Natural killer cell (primary cell): ENCODE measurements at regions of chr13 and their contacts with region 1.

Region 1: GRCh38 chr13:44050450-44051063 is 170.9 kb downstream of the LACC1 start:
- DNase-seq: peak in 1 of 2 donors; percentile 65
- ATAC-seq: peak; percentile 49 to 73 (median 55)
- H3K4me3 ChIP-seq: no peak overlapping the region
- H3K4me3 Mint-ChIP-seq: no peak overlapping the region
- H3K27ac ChIP-seq: no peak overlapping the region
- H3K27ac Mint-ChIP-seq: no peak overlapping the region
- H3K4me1 ChIP-seq: no peaks in the 10 kb centered on the region
- H3K4me1 Mint-ChIP-seq: peaks cover 5% of the 10 kb centered on the region in 2 donors
- H3K27me3 ChIP-seq: no peaks in the 10 kb centered on the region
- H3K27me3 Mint-ChIP-seq: peaks cover 39 to 41% of the 10 kb centered on the region in 2 donors
- CTCF ChIP-seq: peak; percentile 83

Region 2: DNA sequence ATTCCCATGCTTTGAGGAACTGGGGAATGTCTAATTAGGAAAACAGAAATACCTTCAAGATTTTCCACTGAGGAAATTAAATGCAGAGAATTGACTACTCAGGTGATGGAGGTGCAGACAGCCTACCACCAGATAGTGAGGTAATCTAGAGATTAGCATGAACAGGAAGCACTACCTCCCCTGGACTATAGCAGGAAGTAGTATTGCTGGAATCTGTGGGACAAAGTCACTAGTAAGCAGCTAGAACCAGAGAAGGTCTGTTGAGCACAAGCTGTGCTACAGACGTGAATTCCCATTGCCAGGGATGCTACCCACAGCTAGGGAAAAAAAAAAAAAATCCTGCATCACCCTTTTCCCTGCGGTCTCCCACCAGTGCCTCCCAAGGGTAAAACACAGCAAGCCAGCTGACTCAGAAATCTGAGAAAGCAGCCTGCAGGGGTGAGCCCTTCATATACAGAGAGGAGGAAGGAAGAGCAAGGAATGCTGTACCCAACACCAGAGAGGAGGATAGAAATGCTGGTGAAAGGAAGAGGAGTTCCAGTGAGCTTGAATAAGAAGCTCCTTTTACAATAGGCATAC is 274.0 kb before region 1 on chr13:
- intact Hi-C with region 1: no loop called
- DNase-seq: no peak
- ATAC-seq: no peak
- H3K4me3 ChIP-seq: no peak overlapping the region
- H3K4me3 Mint-ChIP-seq: no peak overlapping the region
- H3K27ac ChIP-seq: no peak overlapping the region
- H3K27ac Mint-ChIP-seq: no peak overlapping the region
- H3K4me1 ChIP-seq: no peaks in the 10 kb centered on the region
- H3K4me1 Mint-ChIP-seq: no peaks in the 10 kb centered on the region
- H3K27me3 ChIP-seq: peaks cover 3% of the 10 kb centered on the region
- H3K27me3 Mint-ChIP-seq: peaks cover 6 to 22% of the 10 kb centered on the region in 2 donors
- CTCF ChIP-seq: no peak

Region 3: DNA sequence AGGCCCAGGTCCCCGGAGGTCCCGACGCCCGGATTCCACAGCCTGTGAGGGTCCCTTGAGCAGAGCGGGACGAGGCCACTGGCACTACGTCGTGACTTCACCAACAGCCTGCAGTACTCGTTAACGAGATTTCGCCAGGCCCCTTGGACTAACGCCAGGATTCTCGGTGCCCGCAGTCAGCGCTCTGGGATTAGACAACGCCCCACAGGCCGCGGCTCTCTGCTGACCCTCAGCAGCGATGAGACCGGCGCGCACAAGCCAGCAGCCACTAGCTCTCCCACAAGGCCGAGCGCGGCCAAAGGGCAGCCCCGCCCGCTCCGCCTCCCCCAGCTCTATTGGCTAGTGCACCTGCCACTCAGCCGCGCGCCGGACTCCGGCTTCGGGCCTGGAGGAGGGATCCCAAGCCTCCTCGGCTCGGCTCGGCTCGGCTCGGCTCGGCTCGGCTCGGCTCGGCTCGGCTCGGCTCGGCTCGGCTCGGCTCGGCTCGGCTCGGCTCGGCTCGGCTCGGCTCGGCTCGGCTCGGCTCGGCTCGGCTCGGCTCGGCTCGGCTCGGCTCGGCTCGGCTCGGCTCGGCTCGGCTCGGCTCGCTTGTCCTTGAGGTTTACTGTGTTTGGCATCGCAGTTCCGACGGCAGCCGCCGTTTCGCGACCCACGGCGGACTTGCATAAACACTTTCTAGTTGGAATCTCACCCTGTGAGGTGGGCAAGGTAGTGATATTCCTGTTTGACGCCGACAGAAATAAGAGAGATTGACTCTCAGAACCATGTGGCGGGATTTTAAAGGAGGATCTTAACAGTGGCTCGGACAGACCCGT is 91.4 kb after region 1 on chr13:
- intact Hi-C with region 1: loop called (anchors 10 kb)
- DNase-seq: peak; percentile 89 to 99
- ATAC-seq: peak; percentile 97 to 100 (median 98)
- H3K4me3 ChIP-seq: peak overlapping the region; percentile 68
- H3K4me3 Mint-ChIP-seq: peak overlapping the region; percentile 91
- H3K27ac ChIP-seq: peak overlapping the region; percentile 90
- H3K27ac Mint-ChIP-seq: peak overlapping the region; percentile 85 to 91
- H3K4me1 ChIP-seq: peaks cover 13% of the 10 kb centered on the region
- H3K4me1 Mint-ChIP-seq: peaks cover 17 to 20% of the 10 kb centered on the region in 2 donors
- H3K27me3 ChIP-seq: no peaks in the 10 kb centered on the region
- H3K27me3 Mint-ChIP-seq: peaks cover 2 to 6% of the 10 kb centered on the region in 2 donors
- CTCF ChIP-seq: no peak

Region 4: GRCh38 chr13:44470638-44471562 is 420.3 kb after region 1 on chr13:
- intact Hi-C with region 1: loop called (anchors 1 kb)
- DNase-seq: peak in 1 of 2 donors; percentile 59
- ATAC-seq: no peak
- H3K4me3 ChIP-seq: no peak overlapping the region
- H3K4me3 Mint-ChIP-seq: no peak overlapping the region
- H3K27ac ChIP-seq: no peak overlapping the region
- H3K27ac Mint-ChIP-seq: no peak overlapping the region
- H3K4me1 ChIP-seq: no peaks in the 10 kb centered on the region
- H3K4me1 Mint-ChIP-seq: peaks cover 0 to 4% of the 10 kb centered on the region in 2 donors
- H3K27me3 ChIP-seq: no peaks in the 10 kb centered on the region
- H3K27me3 Mint-ChIP-seq: no peaks in the 10 kb centered on the region
- CTCF ChIP-seq: peak; percentile 54